Heart left ventricle (tissue), 16 donors: ENCODE measurements at regions of chr15 and their contacts with region 1.

Region 1: GRCh38 chr15:55835866-55836265 is 92.9 kb upstream of the PRTG start:
- DNase-seq: no peak
- ATAC-seq: no peak
- H3K4me3 ChIP-seq: no peak overlapping the region
- H3K27ac ChIP-seq: no peak overlapping the region
- H3K4me1 ChIP-seq: no peaks in the 10 kb centered on the region
- H3K27me3 ChIP-seq: no peaks in the 10 kb centered on the region
- CTCF ChIP-seq: no peak
- POLR2A ChIP-seq: no peak

Region 2: GRCh38 chr15:55334997-55335396 is 500.9 kb before region 1 on chr15:
- intact Hi-C with region 1: no loop called
- DNase-seq: no peak
- ATAC-seq: no peak
- H3K4me3 ChIP-seq: no peak overlapping the region
- H3K27ac ChIP-seq: no peak overlapping the region
- H3K4me1 ChIP-seq: no peaks in the 10 kb centered on the region
- H3K27me3 ChIP-seq: no peaks in the 10 kb centered on the region
- CTCF ChIP-seq: no peak
- POLR2A ChIP-seq: no peak

Region 3: GRCh38 chr15:55535436-55535835 is 300.4 kb before region 1 on chr15:
- intact Hi-C with region 1: no loop called
- DNase-seq: no peak
- ATAC-seq: no peak
- H3K4me3 ChIP-seq: no peak overlapping the region
- H3K27ac ChIP-seq: no peak overlapping the region
- H3K4me1 ChIP-seq: no peaks in the 10 kb centered on the region
- H3K27me3 ChIP-seq: no peaks in the 10 kb centered on the region
- CTCF ChIP-seq: no peak
- POLR2A ChIP-seq: no peak

Region 4: DNA sequence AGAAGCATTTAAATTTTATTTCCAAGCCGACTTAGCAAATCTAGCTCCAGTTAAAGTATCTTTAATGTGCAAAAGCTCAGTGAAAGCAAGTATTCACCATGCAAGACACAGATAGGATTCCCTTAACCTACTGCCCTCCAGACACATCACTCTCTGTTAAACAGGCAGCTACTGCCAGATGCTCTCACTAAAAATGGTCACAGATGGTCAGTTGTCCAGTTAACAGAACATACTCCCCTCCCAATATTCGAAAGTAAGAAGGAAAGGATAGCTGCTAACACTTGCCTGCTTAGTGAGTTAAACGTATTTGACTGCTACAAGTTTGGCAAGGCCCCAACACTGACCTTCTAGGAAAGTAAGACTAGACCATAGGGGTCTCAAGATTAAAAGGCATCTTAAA is 166.6 kb before region 1 on chr15:
- intact Hi-C with region 1: loop called in 1 of 10 experiments (anchors 5 kb)
- DNase-seq: no peak
- ATAC-seq: no peak
- H3K4me3 ChIP-seq: no peak overlapping the region
- H3K27ac ChIP-seq: no peak overlapping the region
- H3K4me1 ChIP-seq: no peaks in the 10 kb centered on the region
- H3K27me3 ChIP-seq: no peaks in the 10 kb centered on the region
- CTCF ChIP-seq: no peak
- POLR2A ChIP-seq: no peak

Region 5: GRCh38 chr15:55907797-55908196 is 71.9 kb after region 1 on chr15:
- intact Hi-C with region 1: no loop called
- DNase-seq: no peak
- ATAC-seq: no peak
- H3K4me3 ChIP-seq: no peak overlapping the region
- H3K27ac ChIP-seq: no peak overlapping the region
- H3K4me1 ChIP-seq: peaks cover 0 to under 1% (median 0%) of the 10 kb centered on the region in 12 donors
- H3K27me3 ChIP-seq: no peaks in the 10 kb centered on the region
- CTCF ChIP-seq: no peak
- POLR2A ChIP-seq: no peak

Region 6: GRCh38 chr15:56454836-56455235 is 619.0 kb after region 1 on chr15:
- intact Hi-C with region 1: no loop called
- DNase-seq: no peak
- ATAC-seq: no peak
- H3K4me3 ChIP-seq: no peak overlapping the region
- H3K27ac ChIP-seq: peak overlapping the region in 1 of 12 donors; percentile 13
- H3K4me1 ChIP-seq: no peaks in the 10 kb centered on the region
- H3K27me3 ChIP-seq: no peaks in the 10 kb centered on the region
- CTCF ChIP-seq: no peak
- POLR2A ChIP-seq: no peak